Aorta (tissue), 5 donors: ENCODE measurements at regions of chr10 and their contacts with region 1.

Region 1: GRCh38 chr10:74262856-74263255 is 111.8 kb downstream of the ADK start:
- DNase-seq: no peak
- ATAC-seq: no peak
- H3K4me3 ChIP-seq: no peak overlapping the region
- H3K27ac ChIP-seq: no peak overlapping the region
- H3K4me1 ChIP-seq: peaks cover 0 to 2% of the 10 kb centered on the region in 2 donors
- H3K27me3 ChIP-seq: no peaks in the 10 kb centered on the region

Region 2: DNA sequence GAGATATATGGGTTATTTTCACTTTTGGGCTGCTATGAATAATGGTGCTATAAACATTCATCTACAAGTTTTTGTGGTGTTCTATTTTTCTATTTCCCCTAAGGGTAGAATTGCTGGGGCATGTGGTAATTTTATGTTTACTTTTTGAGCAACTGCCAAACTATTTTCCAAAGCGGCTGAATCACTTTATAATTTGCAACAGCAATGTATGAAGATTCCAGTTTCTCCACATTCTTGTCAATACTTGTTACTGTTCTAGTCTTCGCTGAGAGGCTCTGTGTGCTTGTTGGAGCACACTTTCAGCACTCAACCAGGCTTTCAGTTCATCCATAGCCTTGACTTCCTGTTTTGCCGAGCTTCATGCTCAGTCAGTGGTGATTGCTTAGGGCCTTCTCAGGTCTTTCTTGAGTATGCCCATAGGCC is 72.8 kb before region 1 on chr10:
- intact Hi-C with region 1: no loop called
- DNase-seq: no peak
- ATAC-seq: no peak
- H3K4me3 ChIP-seq: peak overlapping the region in 1 of 2 donors; percentile 26
- H3K27ac ChIP-seq: peak overlapping the region; percentile 30 to 90
- H3K4me1 ChIP-seq: peaks cover 0 to 5% of the 10 kb centered on the region in 2 donors
- H3K27me3 ChIP-seq: no peaks in the 10 kb centered on the region

Region 3: DNA sequence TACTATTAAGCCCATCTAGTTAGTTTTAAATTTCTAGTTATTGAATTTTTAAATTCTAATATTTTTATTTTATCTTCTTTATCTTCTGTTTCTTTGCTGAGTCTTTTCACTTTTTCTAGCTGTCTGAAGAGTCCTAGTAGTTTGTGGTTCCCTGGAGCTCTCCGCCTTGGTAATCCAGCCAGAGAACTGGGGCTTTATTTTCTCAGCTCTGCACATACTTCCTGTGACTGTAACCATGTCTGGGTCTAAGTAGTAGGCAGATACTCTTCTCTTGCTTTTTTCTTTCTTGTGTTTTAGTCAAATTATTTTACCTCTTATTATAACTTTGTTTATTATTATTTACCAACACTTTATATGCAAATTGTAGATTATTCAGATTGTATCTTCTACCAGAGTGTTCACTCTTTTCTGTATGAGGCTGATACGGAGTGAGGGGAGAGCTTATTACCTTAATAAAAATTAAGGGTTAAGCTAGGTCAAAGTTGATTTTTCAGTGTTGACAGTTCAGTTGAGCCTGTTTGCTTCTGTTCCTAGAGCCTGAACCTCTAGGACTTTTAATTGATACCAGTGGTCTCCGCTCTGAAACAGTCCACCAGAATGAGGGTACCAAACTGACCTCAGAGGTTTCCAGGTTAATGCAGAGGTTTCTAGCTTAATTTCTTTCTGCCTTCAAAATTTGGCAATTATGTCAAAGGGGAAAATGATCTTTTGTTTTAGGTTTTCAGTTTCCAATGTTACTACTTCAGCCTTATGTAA is 43.5 kb after region 1 on chr10:
- intact Hi-C with region 1: no loop called
- DNase-seq: no peak
- ATAC-seq: no peak
- H3K4me3 ChIP-seq: no peak overlapping the region
- H3K27ac ChIP-seq: peak overlapping the region in 1 of 2 donors; percentile 43
- H3K4me1 ChIP-seq: peaks cover 0 to 2% of the 10 kb centered on the region in 2 donors
- H3K27me3 ChIP-seq: no peaks in the 10 kb centered on the region

Region 4: DNA sequence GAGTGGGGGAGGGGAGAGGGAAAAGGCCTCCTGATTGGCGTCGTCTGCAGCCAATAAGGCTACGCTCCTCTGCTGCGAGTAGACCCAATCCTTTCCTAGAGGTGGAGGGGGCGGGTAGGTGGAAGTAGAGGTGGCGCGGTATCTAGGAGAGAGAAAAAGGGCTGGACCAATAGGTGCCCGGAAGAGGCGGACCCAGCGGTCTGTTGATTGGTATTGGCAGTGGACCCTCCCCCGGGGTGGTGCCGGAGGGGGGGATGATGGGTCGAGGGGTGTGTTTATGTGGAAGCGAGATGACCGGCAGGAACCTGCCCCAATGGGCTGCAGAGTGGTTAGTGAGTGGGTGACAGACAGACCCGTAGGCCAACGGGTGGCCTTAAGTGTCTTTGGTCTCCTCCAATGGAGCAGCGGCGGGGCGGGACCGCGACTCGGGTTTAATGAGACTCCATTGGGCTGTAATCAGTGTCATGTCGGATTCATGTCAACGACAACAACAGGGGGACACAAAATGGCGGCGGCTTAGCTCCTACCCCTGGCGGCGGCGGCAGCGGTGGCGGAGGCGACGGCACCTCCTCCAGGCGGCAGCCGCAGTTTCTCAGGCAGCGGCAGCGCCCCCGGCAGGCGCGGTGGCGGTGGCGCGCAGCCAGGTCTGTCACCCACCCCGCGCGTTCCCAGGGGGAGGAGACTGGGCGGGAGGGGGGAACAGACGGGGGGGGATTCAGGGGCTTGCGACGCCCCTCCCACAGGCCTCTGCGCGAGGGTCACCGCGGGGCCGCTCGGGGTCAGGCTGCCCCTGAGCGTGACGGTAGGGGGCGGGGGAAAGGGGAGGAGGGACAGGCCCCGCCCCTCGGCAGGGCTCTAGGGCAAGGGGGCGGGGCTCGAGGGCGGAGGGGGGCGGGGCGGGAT is 563.5 kb after region 1 on chr10 and contains the start of gene KAT6B:
- intact Hi-C with region 1: loop called (anchors 10 kb)
- DNase-seq: peak; percentile 100
- ATAC-seq: peak; percentile 96
- H3K4me3 ChIP-seq: peak within 1 kb of the TSS; percentile 92 to 95
- H3K27ac ChIP-seq: peak within 1 kb of the TSS; percentile 90
- H3K4me1 ChIP-seq: peaks cover 2 to 5% of the 10 kb centered on the region in 2 donors
- H3K27me3 ChIP-seq: no peaks in the 10 kb centered on the region
- total RNA-seq, gene KAT6B: 29.4 to 47.5 TPM

Region 5: GRCh38 chr10:75019370-75019769 is 756.5 kb after region 1 on chr10:
- intact Hi-C with region 1: loop called (anchors 5 kb)
- DNase-seq: no peak
- ATAC-seq: no peak
- H3K4me3 ChIP-seq: no peak overlapping the region
- H3K27ac ChIP-seq: no peak overlapping the region
- H3K4me1 ChIP-seq: no peaks in the 10 kb centered on the region
- H3K27me3 ChIP-seq: no peaks in the 10 kb centered on the region

Region 6: DNA sequence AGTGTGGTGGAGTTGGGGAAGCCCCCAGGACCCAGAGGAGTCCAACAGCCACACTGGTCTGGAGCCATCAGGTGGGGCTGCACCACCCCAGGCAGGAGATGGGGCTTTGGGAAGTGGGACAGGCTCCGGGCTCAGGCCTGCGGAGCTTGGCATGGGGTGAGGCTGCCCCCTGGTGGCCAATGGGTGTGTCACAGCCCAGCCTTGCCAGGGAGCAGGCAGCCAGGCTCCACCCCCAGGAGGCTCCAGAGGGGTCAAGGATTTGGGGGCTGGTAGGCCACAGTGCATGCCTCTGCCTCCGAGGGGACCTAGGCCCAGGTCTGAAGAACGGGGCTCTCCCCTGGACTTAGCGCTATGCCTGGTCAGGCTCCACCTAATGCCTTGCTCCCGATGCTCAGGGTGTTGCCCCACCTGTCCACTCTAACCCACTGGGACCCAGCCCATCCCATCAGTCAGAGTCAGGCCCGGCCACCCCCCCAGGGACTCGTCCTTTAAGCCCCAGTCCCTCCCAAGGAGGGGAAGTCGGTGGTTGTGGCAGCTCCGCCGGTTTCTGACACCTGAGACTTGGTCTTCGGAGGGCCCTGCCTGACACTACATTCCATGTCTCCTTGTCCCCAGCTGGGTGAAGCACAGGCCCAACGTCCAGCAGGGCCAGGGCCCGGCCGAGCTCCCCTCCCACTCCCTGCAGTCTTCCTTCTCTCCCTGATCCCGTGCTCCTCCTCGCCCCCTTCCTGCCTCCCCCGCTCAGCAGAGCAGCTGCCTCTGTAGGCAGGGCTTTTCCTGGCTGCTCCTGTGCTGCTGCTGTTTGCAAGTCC is 837.3 kb after region 1 on chr10:
- intact Hi-C with region 1: loop called (anchors 5 kb)
- DNase-seq: peak; percentile 87 to 95
- ATAC-seq: peak; percentile 90
- H3K4me3 ChIP-seq: no peak overlapping the region
- H3K27ac ChIP-seq: no peak overlapping the region
- H3K4me1 ChIP-seq: no peaks in the 10 kb centered on the region
- H3K27me3 ChIP-seq: no peaks in the 10 kb centered on the region